Activated CD4-positive, alpha-beta memory T cell treated with anti-CD3 and anti-CD28 coated beads, Interleukin-2, amount 10 ng/mL, durations not matched to agents 7 days and 5 days (primary cell): ENCODE measurements at regions of chr16 and their contacts with region 1.

Region 1: GRCh38 chr16:46862555-46863447 is 21.4 kb upstream of the GPT2 start:
- DNase-seq: no peak
- H3K4me3 Mint-ChIP-seq: no peak overlapping the region
- H3K27ac Mint-ChIP-seq: peak overlapping the region; percentile 34
- H3K4me1 Mint-ChIP-seq: peaks cover 48% of the 10 kb centered on the region
- H3K27me3 Mint-ChIP-seq: no peaks in the 10 kb centered on the region

Region 2: GRCh38 chr16:46883690-46884512 is 21.1 kb after region 1 on chr16 and contains the start of gene GPT2:
- CTCF ChIA-PET with region 1: interaction called, 5 read pairs
- POLR2A ChIA-PET with region 1: interaction called, 15 read pairs
- DNase-seq: peak; percentile 88
- H3K4me3 Mint-ChIP-seq: peak within 1 kb of the TSS; percentile 78
- H3K27ac Mint-ChIP-seq: peak within 1 kb of the TSS; percentile 73
- H3K4me1 Mint-ChIP-seq: peaks cover 18% of the 10 kb centered on the region
- H3K27me3 Mint-ChIP-seq: peaks cover 18% of the 10 kb centered on the region
- total RNA-seq, gene GPT2: 15.0 to 15.2 TPM

Region 3: GRCh38 chr16:46899443-46900143 is 36.8 kb after region 1 on chr16:
- CTCF ChIA-PET with region 1: no interaction called
- POLR2A ChIA-PET with region 1: no interaction called
- DNase-seq: no peak
- H3K4me3 Mint-ChIP-seq: no peak overlapping the region
- H3K27ac Mint-ChIP-seq: no peak overlapping the region
- H3K4me1 Mint-ChIP-seq: no peaks in the 10 kb centered on the region
- H3K27me3 Mint-ChIP-seq: no peaks in the 10 kb centered on the region